Heart right ventricle (tissue), 16 donors: ENCODE measurements at regions of chr20 and their contacts with region 1.

Region 1: GRCh38 chr20:4326195-4327065 is 311.1 kb upstream of the RNF24 start:
- DNase-seq: peak; percentile 23 to 31
- ATAC-seq: peak in 7 of 8 donors; percentile 19 to 71 (median 54)
- H3K4me3 ChIP-seq: no peak overlapping the region
- H3K27ac ChIP-seq: peak overlapping the region in 4 of 10 donors; percentile 23 to 43 (median 34)
- H3K4me1 ChIP-seq: peaks cover 0 to 14% (median 0%) of the 10 kb centered on the region in 9 donors
- H3K27me3 ChIP-seq: peaks cover 0 to 8% (median 0%) of the 10 kb centered on the region in 7 donors
- CTCF ChIP-seq: no peak

Region 2: DNA sequence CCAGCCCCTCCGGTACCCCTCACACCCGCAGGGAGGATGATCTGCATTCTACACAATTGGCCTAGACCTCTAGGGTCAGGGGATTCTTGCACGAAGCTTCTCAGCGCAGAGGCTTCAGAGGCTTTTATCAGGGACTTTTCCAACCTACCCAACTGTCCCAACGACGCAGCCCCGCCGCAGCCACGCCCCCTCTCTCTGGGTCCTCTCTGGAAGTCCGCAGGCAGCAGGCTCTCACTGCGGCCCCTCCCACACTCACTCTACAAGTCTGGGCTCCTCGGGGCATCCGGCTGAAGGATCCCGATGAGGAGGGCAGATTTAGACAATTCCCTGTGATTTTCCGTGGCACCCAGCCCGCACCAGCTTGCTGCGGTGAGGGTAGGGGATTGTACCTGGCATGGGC is 83.4 kb before region 1 on chr20:
- intact Hi-C with region 1: no loop called
- DNase-seq: no peak
- ATAC-seq: peak in 2 of 8 donors; percentile 25 to 30
- H3K4me3 ChIP-seq: no peak overlapping the region
- H3K27ac ChIP-seq: no peak overlapping the region
- H3K4me1 ChIP-seq: peaks cover 0 to 6% (median 0%) of the 10 kb centered on the region in 9 donors
- H3K27me3 ChIP-seq: peaks cover 1 to 62% (median 38%) of the 10 kb centered on the region in 7 donors
- CTCF ChIP-seq: no peak

Region 3: DNA sequence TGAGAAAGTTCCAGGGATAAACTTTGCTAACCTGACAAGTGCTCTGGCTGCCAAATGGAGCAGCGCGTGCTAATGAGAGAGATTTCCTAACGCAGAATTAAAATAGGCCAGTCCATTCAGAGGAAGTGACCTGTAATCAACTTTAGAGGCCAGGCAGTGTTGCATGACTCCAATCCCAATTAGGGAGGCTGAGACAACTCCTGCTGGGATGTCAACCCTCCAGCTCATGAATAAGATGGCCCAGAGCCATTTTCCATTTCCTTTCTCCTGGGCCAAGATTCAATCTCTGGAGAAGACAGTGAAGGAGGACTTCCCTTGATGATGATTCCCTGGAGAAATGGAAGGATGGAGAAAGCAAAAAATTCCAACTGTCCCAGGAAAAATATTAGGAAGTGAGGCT is 69.6 kb before region 1 on chr20:
- intact Hi-C with region 1: loop called in 1 of 10 experiments (anchors 10 kb)
- DNase-seq: peak in 1 of 2 donors; percentile 39
- ATAC-seq: peak in 7 of 8 donors; percentile 48 to 89 (median 69)
- H3K4me3 ChIP-seq: no peak overlapping the region
- H3K27ac ChIP-seq: peak overlapping the region in 1 of 10 donors; percentile 14
- H3K4me1 ChIP-seq: peaks cover 0 to 14% (median 0%) of the 10 kb centered on the region in 9 donors
- H3K27me3 ChIP-seq: peaks cover 0 to 7% (median 0%) of the 10 kb centered on the region in 7 donors
- CTCF ChIP-seq: no peak

Region 4: GRCh38 chr20:4384961-4385360 is 58.5 kb after region 1 on chr20:
- intact Hi-C with region 1: no loop called
- DNase-seq: no peak
- ATAC-seq: no peak
- H3K4me3 ChIP-seq: no peak overlapping the region
- H3K27ac ChIP-seq: no peak overlapping the region
- H3K4me1 ChIP-seq: no peaks in the 10 kb centered on the region
- H3K27me3 ChIP-seq: peaks cover 0 to 22% (median 5%) of the 10 kb centered on the region in 7 donors
- CTCF ChIP-seq: no peak